Sigmoid colon (tissue), 7 donors: ENCODE measurements at regions of chr11 and their contacts with region 1.

Region 1: DNA sequence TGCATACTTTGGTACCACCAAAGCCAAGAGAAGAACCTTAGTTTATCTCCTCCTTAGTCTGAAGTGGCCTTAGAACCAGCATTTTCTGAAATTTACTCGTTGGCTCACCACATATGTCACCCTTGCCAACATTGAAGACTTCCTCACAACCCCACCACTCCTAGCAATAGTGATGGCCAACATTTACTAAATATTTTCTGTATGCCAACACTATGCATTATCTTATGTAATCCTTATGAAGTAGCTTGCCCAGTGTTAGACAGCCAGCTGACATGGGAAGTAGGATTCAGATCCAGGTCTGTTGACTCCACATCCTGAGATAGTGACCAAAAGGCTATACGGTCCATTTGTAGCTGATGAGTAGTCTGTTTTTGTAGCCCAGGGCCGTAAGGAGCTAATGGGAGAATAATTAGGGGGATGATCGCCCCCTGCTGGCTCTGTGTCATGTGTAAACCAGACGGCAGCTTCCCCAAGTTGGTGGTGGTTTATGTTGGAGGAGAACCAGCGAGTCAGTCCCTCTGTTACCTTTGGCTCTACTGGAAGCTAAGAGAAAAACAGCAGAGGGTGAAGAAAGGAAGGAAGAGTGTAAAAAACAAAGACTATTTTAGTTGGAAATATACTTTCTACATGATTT is 120.5 kb upstream of the RASSF10 start:
- DNase-seq: peak; percentile 95
- H3K4me3 ChIP-seq: no peak overlapping the region
- H3K27ac ChIP-seq: peak overlapping the region; percentile 73 to 91 (median 84)
- H3K4me1 ChIP-seq: peaks cover 0 to 79% (median 66%) of the 10 kb centered on the region in 4 donors
- H3K27me3 ChIP-seq: no peaks in the 10 kb centered on the region
- CTCF ChIP-seq: peak; percentile 71 to 84 (median 78)
- EP300 ChIP-seq: peak in 1 of 4 donors; percentile 16
- POLR2A ChIP-seq: no peak

Region 2: GRCh38 chr11:12540913-12541582 is 347.6 kb before region 1 on chr11:
- intact Hi-C with region 1: loop called (anchors 10 kb)
- DNase-seq: peak; percentile 83
- H3K4me3 ChIP-seq: no peak overlapping the region
- H3K27ac ChIP-seq: peak overlapping the region; percentile 70 to 84 (median 76)
- H3K4me1 ChIP-seq: peaks cover 0 to 61% (median 54%) of the 10 kb centered on the region in 4 donors
- H3K27me3 ChIP-seq: no peaks in the 10 kb centered on the region
- CTCF ChIP-seq: peak in 2 of 4 experiments; percentile 19 to 20
- EP300 ChIP-seq: no peak
- POLR2A ChIP-seq: no peak

Region 3: GRCh38 chr11:12680246-12680939 is 208.2 kb before region 1 on chr11:
- intact Hi-C with region 1: loop called (anchors 1 kb)
- DNase-seq: peak; percentile 95
- H3K4me3 ChIP-seq: peak overlapping the region in 2 of 4 donors; percentile 10 to 22
- H3K27ac ChIP-seq: peak overlapping the region; percentile 64 to 99 (median 99)
- H3K4me1 ChIP-seq: peaks cover 0 to 83% (median 60%) of the 10 kb centered on the region in 4 donors
- H3K27me3 ChIP-seq: no peaks in the 10 kb centered on the region
- CTCF ChIP-seq: no peak
- EP300 ChIP-seq: peak in 1 of 4 donors; percentile 25
- POLR2A ChIP-seq: peak; percentile 52 to 57

Region 4: DNA sequence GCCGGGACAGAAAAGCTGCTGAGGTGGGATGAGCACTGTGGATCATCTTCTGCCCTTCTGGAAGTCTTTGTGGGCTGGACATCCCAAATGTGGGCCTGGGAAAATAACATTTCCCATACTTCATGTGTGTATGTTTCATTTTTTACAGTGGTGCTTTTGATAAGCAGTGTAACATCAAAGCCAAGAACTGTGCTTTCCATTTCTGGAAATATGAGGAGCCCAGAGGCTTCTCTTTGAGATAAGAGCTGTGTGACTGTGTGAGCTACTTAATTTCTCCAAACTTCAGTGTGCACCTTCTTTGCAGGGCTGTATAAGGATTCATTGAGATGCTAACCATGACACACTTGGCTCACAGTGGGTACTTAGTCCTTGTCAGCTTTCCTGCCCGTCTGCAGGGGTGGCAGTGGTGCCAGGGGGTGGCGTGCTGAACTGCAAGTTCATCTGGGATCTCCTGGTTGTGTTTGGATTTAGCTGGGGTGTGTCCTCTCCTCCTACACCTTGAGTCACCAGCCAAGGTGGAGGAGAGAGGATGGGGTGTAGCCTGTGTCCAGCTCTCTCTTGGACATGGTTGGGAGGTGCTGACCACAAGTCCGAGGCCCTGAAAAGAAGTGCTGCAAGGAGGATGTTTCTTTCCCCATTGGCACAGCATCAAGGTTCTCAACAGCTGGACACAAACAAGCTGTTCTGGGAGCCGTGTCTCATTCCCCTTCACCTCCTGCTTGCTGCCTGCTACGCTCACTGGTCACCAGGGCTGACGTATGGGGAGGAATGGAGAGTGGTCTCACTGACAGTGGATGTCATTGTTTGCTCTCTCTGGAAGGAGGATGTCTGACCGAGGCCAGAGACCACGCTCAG is 75.0 kb before region 1 on chr11:
- intact Hi-C with region 1: loop called (anchors 5 kb)
- DNase-seq: peak; percentile 87
- H3K4me3 ChIP-seq: no peak overlapping the region
- H3K27ac ChIP-seq: peak overlapping the region; percentile 53 to 85 (median 80)
- H3K4me1 ChIP-seq: peaks cover 0 to 88% (median 76%) of the 10 kb centered on the region in 4 donors
- H3K27me3 ChIP-seq: no peaks in the 10 kb centered on the region
- CTCF ChIP-seq: peak in 1 of 4 experiments; percentile 13
- EP300 ChIP-seq: no peak
- POLR2A ChIP-seq: no peak